ENCODE measurements at regions of chr1 and their contacts with region 1.

Region 1: DNA sequence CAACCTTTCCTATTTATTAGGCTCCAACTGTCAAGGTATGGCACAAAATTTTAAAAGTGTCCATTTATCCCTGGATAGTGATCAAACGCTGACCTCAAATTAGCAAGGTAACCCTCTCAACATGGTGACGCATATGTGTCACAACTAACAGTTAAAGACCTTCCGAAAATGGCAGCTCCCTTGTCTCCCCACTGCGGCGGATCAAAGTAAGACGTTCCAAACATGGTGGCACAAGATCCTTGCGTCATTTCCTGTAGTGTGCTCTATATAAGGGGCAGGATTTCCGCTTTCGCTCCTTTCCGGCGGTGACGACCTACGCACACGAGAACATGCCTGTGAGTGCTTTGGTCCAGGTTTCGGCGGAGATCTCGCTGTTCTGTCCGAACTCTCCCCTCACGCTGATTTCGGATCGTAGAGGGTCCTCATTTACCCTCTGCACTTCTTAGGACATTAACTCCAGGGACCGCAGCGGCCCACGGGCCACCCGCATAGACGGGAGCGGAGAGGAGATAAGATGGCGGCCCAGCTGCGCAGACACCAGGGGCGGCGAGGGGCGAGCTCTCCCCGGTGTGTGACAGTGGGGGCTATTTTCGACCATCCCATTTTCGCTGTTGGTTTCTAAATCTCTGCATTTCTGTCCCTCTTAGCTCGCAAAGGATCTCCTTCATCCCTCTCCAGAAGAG is at the start of gene RPS27:
- DNase-seq: peak; percentile 96
- H3K4me3 ChIP-seq: peak within 1 kb of the TSS; percentile 15 to 86 (median 79)
- H3K27ac ChIP-seq: peak within 1 kb of the TSS; percentile 90
- H3K4me1 ChIP-seq: peaks cover 24% of the 10 kb centered on the region
- H3K27me3 ChIP-seq: no peaks in the 10 kb centered on the region
- CTCF ChIP-seq: no peak
- POLR2A ChIP-seq: peak; percentile 99
- total RNA-seq, gene RPS27: 1,120 and 1,234 TPM in 2 replicates

Region 2: GRCh38 chr1:153677718-153678505 is 312.7 kb before region 1 on chr1:
- CTCF ChIA-PET with region 1: interaction called, 26 read pairs
- POLR2A ChIA-PET with region 1: no interaction called
- dilution Hi-C with region 1: no loop called
- intact Hi-C with region 1: loop called (anchors 1 kb)
- DNase-seq: peak; percentile 72
- H3K4me3 ChIP-seq: peak overlapping the region; percentile 15 to 44 (median 22)
- H3K27ac ChIP-seq: no peak overlapping the region
- H3K4me1 ChIP-seq: peaks cover 11% of the 10 kb centered on the region
- H3K27me3 ChIP-seq: peaks cover 4 to 5% of the 10 kb centered on the region in 2 experiments
- CTCF ChIP-seq: peak; percentile 91 to 92
- POLR2A ChIP-seq: no peak

Region 3: DNA sequence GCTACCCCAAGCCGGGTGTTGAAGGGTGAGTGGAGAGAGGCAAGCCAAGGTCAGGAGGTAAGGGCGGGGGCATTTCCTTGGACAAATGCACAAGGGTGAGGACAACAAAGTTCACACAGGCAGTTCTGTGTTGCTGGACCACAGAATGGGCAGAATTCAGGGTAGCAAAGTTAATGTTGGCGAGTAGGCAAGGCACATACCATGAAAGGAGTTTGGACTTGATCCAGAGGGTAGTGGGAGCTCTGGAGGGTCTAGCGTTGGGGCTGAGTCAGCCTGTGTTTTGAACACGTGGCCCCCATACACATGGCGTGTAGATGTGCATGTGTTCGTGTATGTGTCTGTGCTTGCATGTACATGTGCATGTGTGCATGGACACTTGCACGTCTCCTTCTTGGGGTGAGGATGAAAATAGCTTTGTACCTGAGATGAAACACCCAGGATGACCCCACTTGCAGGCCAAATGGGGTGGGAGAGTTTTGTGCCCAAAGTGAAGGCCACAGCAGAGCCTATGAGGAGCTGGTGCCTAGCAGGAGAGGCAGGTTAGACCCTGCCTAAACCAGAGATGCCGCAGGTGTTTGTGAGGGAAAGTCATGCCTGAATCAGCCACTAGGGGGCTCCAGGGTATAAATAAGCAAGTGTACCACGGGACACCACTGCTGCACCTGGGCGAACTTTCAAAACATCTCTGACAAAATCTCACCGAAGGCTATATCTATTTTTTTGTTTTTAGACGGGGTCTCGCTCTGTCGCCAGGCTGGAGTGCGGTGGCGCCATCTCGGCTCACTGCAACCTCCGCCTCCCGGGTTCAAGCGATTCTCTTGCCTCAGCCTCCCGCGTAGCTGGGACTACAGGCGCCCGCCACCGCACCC is 193.6 kb before region 1 on chr1:
- CTCF ChIA-PET with region 1: interaction called, 65 read pairs
- POLR2A ChIA-PET with region 1: interaction called, 4 read pairs
- dilution Hi-C with region 1: no loop called
- intact Hi-C with region 1: loop called (anchors 1 kb)
- DNase-seq: peak; percentile 58
- H3K4me3 ChIP-seq: no peak overlapping the region
- H3K27ac ChIP-seq: no peak overlapping the region
- H3K4me1 ChIP-seq: no peaks in the 10 kb centered on the region
- H3K27me3 ChIP-seq: no peaks in the 10 kb centered on the region
- CTCF ChIP-seq: peak; percentile 68 to 81
- POLR2A ChIP-seq: no peak

Region 4: GRCh38 chr1:153922972-153923925 is 67.4 kb before region 1 on chr1 and contains the start of gene GATAD2B:
- CTCF ChIA-PET with region 1: interaction called, 5 read pairs
- POLR2A ChIA-PET with region 1: no interaction called
- dilution Hi-C with region 1: no loop called
- intact Hi-C with region 1: loop called (anchors 1 kb)
- DNase-seq: peak; percentile 100
- H3K4me3 ChIP-seq: peak within 1 kb of the TSS; percentile 68 to 91 (median 85)
- H3K27ac ChIP-seq: peak within 1 kb of the TSS; percentile 60
- H3K4me1 ChIP-seq: peaks cover 24% of the 10 kb centered on the region
- H3K27me3 ChIP-seq: no peaks in the 10 kb centered on the region
- CTCF ChIP-seq: no peak
- POLR2A ChIP-seq: peak; percentile 80
- total RNA-seq, gene GATAD2B: 46.3 and 49.2 TPM in 2 replicates

Region 5: GRCh38 chr1:153977250-153978240 is 13.1 kb before region 1 on chr1 and contains the start of gene JTB:
- CTCF ChIA-PET with region 1: interaction called, 8 read pairs
- POLR2A ChIA-PET with region 1: no interaction called
- dilution Hi-C with region 1: no loop called
- intact Hi-C with region 1: loop called (anchors 1 kb)
- DNase-seq: peak; percentile 82
- H3K4me3 ChIP-seq: peak within 1 kb of the TSS; percentile 50 to 91 (median 70)
- H3K27ac ChIP-seq: peak within 1 kb of the TSS; percentile 4
- H3K4me1 ChIP-seq: peaks cover 10% of the 10 kb centered on the region
- H3K27me3 ChIP-seq: no peaks in the 10 kb centered on the region
- CTCF ChIP-seq: no peak
- POLR2A ChIP-seq: peak; percentile 94
- total RNA-seq, gene JTB: 89.0 and 90.2 TPM in 2 replicates

Region 6: GRCh38 chr1:154272217-154272998 is 281.8 kb after region 1 on chr1 and contains the start of gene HAX1:
- CTCF ChIA-PET with region 1: no interaction called
- POLR2A ChIA-PET with region 1: no interaction called
- dilution Hi-C with region 1: no loop called
- intact Hi-C with region 1: loop called (anchors 5 kb)
- DNase-seq: peak; percentile 97
- H3K4me3 ChIP-seq: peak within 1 kb of the TSS; percentile 79 to 91 (median 81)
- H3K27ac ChIP-seq: peak within 1 kb of the TSS; percentile 69
- H3K4me1 ChIP-seq: peaks cover 15% of the 10 kb centered on the region
- H3K27me3 ChIP-seq: no peaks in the 10 kb centered on the region
- CTCF ChIP-seq: peak; percentile 81
- POLR2A ChIP-seq: peak; percentile 71
- total RNA-seq, gene HAX1: 69.1 and 78.4 TPM in 2 replicates

Measured in endothelial cell of umbilical vein (primary cell).